ENCODE measurements at regions of chr6 and their contacts with region 1.

Region 1: DNA sequence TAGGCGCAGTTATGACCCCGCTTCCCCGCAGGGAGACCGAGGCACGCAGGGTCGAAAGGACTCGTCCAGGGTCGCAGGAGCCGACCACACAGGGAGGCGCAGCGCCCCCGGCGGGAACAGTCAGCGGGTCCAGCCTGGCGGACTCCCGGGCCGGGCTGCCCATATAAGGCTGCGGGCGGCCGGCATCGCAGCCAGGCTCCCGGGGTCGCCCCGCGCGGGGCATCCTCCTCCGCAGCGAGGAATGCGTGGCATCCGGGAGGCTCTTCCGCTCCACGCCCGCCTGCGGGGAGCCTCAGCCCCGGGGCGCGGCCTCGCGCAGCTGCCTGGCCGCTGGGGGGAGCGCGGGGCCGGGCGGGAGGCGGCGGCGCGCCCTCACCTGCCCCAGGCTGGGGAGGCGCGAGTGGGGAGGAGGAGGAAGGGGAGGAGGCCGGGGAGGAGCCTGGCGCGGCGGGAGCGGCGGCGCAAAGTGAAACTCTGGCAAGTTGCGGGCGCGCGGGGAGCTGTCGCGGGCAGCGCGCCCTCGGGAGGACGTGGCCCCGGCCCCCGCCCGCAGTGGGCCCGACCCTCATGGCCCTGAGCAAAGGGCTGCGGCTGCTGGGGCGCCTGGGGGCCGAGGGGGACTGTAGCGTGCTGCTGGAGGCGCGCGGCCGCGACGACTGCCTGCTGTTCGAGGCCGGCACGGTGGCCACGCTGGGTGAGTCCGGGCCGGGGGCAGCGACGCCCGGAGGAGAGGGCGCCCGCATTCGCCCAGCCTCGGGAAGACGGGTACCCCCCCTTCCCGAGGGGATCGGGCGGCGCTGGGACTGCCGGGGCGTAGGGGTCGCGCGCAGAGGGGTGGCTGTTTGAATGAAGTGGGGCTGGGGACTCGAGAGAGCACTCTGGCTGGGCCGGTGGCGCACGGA is at the start of gene SYNJ2:
- DNase-seq: peak; percentile 93 to 96 (median 95)
- ATAC-seq: peak; percentile 90
- H3K4me3 ChIP-seq: peak within 1 kb of the TSS; percentile 79
- H3K27ac ChIP-seq: peak within 1 kb of the TSS; percentile 85
- H3K4me1 ChIP-seq: peaks cover 24 to 31% of the 10 kb centered on the region in 2 experiments; a peak in 4 of 5 replicates
- H3K27me3 ChIP-seq: no peaks in the 10 kb centered on the region
- CTCF ChIP-seq: peak; percentile 51 to 83 (median 54); a peak in 5 of 6 replicates
- EP300 ChIP-seq: no peak
- POLR2A ChIP-seq: peak; percentile 74
- RAD21 ChIP-seq: peak; percentile 54 to 64
- polyA plus RNA-seq, gene SYNJ2: 3.0 to 3.3 TPM

Region 2: DNA sequence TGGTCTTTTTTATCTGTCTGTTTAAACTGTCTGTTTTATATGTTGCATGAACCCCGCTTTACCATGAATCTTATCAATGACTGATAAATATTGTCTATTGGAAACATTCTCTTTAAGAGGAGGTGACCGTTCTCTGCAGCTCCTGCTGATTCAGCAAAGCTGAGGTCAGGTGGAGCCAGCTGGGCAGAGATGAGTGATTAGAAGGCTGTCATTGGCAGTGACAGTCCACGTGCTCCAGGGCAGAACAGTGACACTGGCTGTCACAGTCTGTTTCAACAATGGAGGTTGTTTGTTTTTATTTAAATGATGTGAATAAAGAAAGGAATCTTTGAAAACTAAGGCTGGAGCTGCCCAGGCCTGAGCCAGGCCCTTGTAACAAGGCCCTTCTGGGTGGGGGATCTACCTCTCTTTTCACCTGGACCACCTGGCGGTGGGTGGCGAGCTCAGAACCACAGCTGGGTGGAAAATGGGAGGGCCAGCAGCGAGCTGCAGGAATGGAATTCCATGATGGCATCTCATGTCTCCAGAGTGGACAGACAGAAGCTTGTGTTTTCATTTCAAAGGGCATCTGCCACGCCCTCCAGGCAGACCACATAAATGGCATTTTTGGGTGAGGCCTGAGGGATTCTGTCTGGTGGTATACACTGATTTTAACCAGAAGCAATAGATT is 12.6 kb after region 1 on chr6:
- CTCF ChIA-PET with region 1: no interaction called
- POLR2A ChIA-PET with region 1: interaction called, 15 read pairs
- in situ Hi-C with region 1: no loop called
- intact Hi-C with region 1: no loop called
- DNase-seq: peak in 2 of 4 experiments; percentile 53 to 56
- ATAC-seq: no peak
- H3K4me3 ChIP-seq: no peak overlapping the region
- H3K27ac ChIP-seq: no peak overlapping the region
- H3K4me1 ChIP-seq: peaks cover 28 to 36% of the 10 kb centered on the region in 2 experiments
- H3K27me3 ChIP-seq: no peaks in the 10 kb centered on the region
- CTCF ChIP-seq: no peak
- EP300 ChIP-seq: no peak
- POLR2A ChIP-seq: no peak
- RAD21 ChIP-seq: no peak

Region 3: DNA sequence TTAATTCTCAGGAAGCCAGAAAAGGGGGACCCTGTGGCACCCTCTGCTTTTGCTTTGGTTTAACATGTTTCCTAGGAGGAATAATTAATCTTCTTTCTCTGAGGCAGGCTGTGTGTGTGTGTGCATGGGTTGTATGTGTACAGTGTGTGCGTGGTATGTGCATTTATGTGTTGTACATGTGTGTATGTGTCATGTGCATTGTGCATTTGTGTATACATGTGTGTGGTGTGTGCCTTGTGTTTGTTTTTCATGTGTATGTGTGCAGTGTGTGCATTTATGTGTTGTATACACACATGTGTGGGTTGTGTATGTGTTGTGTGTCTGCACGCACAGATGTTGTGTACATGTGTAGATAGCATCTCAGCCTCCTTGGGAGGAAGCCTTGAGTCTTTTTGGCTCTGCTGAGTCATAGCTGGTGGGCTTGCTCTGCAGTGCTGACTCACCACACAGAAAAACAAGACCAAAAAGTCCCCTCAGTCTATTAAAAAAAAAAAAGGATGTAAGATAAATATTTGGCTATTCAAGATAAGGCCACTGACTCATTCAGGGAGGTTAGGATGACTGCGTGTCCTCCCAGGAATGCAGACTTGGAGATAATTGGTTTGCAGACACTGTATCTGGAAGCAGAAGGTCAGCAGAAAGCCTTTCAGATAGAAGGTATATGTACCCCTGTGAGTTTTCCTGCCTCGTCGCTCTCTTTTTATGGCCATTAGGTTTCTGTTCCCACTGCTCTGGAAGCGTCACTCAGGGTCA is 58.6 kb after region 1 on chr6:
- CTCF ChIA-PET with region 1: no interaction called
- POLR2A ChIA-PET with region 1: interaction called, 3 read pairs
- in situ Hi-C with region 1: no loop called
- intact Hi-C with region 1: loop called (anchors 2 kb)
- DNase-seq: peak; percentile 89 to 95 (median 94)
- ATAC-seq: peak; percentile 76
- H3K4me3 ChIP-seq: no peak overlapping the region
- H3K27ac ChIP-seq: peak overlapping the region; percentile 80
- H3K4me1 ChIP-seq: peaks cover 46 to 60% of the 10 kb centered on the region in 2 experiments
- H3K27me3 ChIP-seq: no peaks in the 10 kb centered on the region
- CTCF ChIP-seq: peak in 1 of 3 experiments; percentile 5; a peak in 1 of 6 replicates
- EP300 ChIP-seq: peak; percentile 97
- POLR2A ChIP-seq: no peak
- RAD21 ChIP-seq: peak; percentile 18 to 19; a peak in 2 of 4 replicates

Region 4: DNA sequence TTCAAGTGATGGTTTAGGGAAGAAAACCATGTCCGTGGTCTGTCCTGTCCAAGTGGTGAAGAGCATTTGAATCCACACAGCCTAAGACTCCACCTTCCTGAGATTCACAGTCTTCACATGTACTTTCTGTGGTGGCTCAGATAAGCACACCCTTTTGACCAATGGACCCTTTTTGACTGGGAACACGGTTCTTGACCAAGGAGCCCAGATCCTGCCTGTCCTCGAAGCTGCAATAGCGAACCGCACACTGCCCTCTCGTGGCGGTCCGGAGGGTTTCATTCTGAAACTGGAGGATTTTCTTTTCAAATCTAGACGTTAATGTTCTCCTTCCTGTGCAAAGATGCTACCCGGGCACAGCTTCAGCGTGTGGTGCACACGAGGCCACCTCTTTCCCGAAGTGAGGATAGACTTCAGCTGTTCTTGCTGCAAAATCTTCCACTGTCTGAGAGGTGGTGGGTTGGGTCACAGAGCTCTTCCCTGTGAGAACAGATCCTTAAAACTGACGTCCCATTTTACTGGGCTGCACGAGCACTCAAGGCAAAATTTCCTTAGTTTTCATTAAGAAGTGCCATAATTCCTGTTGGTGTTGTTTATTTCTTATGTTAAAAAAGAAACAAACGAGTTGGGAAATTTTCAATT is 90.6 kb after region 1 on chr6:
- CTCF ChIA-PET with region 1: interaction called, 12 read pairs
- POLR2A ChIA-PET with region 1: interaction called, 4 read pairs
- in situ Hi-C with region 1: no loop called
- intact Hi-C with region 1: loop called (anchors 1 kb)
- DNase-seq: peak; percentile 84 to 87 (median 86)
- ATAC-seq: peak; percentile 95
- H3K4me3 ChIP-seq: no peak overlapping the region
- H3K27ac ChIP-seq: no peak overlapping the region; the same call in 2 of the 3 replicates
- H3K4me1 ChIP-seq: peaks cover 4 to 15% of the 10 kb centered on the region in 2 experiments; a peak in 4 of 5 replicates
- H3K27me3 ChIP-seq: no peaks in the 10 kb centered on the region
- CTCF ChIP-seq: peak; percentile 86 to 98 (median 96)
- EP300 ChIP-seq: peak; percentile 48; the same call in 1 of the 2 replicates
- POLR2A ChIP-seq: no peak
- RAD21 ChIP-seq: peak; percentile 96 to 98

Region 5: DNA sequence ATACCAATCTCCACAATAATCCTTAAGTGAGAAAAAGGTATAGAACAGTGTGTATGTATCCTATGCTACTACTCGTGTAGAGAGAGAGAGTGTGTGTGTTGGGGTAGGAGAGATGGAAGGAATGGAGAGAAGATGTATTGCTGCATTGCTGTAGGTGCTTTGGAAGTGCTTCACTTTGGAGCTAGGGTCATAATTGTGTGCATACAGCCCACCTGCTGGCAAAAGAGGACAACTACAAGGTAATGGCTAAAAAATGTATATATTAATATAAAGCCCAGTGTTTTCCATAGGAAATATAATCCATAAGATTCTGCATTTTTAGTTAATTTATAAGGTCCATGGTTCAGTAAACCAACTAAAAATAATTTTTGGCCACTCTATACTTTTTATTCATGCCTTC is 150.3 kb after region 1 on chr6:
- CTCF ChIA-PET with region 1: no interaction called
- POLR2A ChIA-PET with region 1: no interaction called
- in situ Hi-C with region 1: no loop called
- intact Hi-C with region 1: loop called (anchors 5 kb)
- DNase-seq: peak; percentile 31 to 66 (median 54)
- ATAC-seq: peak; percentile 96
- H3K4me3 ChIP-seq: no peak overlapping the region
- H3K27ac ChIP-seq: no peak overlapping the region
- H3K4me1 ChIP-seq: no peaks in the 10 kb centered on the region
- H3K27me3 ChIP-seq: no peaks in the 10 kb centered on the region; a peak in 1 of 5 replicates
- CTCF ChIP-seq: peak; percentile 69 to 86 (median 75)
- EP300 ChIP-seq: no peak
- POLR2A ChIP-seq: no peak
- RAD21 ChIP-seq: peak; percentile 67 to 83

Region 6: DNA sequence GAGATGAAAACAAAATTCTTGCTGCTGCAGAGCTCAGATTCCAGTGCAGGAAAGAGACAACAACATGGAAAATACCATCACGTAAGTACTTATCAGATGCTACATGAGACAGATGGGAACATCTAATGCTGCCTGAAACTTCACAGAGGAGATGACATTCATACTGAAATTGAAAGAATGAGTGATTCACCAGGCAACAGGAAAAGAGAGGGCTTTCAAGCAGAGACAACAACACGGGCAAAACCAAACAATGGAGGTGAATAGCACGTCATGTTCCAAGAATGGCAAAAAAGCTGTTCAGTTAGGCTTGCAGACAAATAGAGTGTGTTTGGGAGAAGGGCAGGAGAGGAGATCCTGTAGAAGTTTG is 225.8 kb after region 1 on chr6:
- CTCF ChIA-PET with region 1: no interaction called
- POLR2A ChIA-PET with region 1: no interaction called
- in situ Hi-C with region 1: no loop called
- intact Hi-C with region 1: loop called (anchors 10 kb)
- DNase-seq: no peak
- ATAC-seq: no peak
- H3K4me3 ChIP-seq: no peak overlapping the region
- H3K27ac ChIP-seq: no peak overlapping the region
- H3K4me1 ChIP-seq: peaks cover 3% of the 10 kb centered on the region in 2 experiments; a peak in 2 of 5 replicates
- H3K27me3 ChIP-seq: peaks cover 31 to 32% of the 10 kb centered on the region in 2 experiments
- CTCF ChIP-seq: no peak
- EP300 ChIP-seq: no peak
- POLR2A ChIP-seq: no peak
- RAD21 ChIP-seq: no peak

Measured in K562 (cell line).